Activated T-helper 1 cell treated with anti-CD3 and anti-CD28 coated beads, Interleukin-12 subunit alpha, Interleukin-12 subunit beta, Interleukin-2, Interleukin-4 antibody, amounts not matched to agents 30 ng/mL and 10 ng/mL and 1 ng/mL, durations not matched to agents 14 hours and 24 hours and 36 hours (primary cell): ENCODE measurements at regions of chr17 and their contacts with region 1.

Region 1: DNA sequence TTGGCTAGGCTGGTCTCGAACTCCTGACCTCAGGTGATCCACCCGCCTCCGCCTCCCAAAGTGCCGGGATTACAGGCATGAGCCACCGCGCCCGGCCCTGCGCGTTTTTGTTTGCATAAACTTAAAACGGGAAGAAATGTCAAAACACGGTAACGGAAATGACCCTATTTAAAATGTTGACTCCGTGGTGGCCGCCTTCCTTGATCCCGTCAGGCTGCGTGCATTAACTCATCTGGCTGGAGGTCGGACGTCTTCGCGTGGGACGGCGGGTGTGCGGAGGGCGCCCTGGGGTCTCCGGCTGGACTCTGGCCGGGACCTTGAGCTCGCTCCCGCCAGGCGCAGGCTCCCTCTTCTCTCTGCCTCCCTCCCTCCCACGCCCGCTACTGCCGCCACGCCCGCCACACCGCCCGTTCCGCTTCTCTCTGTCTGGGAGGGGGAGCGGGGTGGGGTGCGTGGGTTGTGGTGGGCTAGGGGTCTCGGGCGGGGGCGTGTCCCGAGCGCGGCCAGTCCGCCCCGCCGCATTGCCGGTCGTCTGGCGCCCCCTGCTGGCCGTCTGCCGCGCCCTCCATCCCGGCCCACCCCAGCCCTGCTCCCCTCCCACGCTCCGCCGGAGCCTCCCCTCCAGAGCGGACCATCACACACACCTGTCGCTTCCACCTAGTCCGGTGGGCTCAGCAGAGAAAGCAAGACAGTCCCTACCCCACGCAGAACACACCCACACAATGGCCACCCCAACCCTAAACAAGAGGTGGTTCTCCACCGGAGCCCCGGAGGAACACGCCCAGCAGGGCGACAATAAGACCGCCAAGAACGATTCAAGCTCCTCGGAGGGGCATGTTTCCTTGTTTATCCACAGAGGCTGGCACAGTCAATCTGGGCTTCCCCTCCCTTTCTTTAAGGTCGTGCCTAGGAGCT is 1.2 kb upstream of the CCDC42 start:
- DNase-seq: peak; percentile 63
- H3K4me3 Mint-ChIP-seq: peak overlapping the region; percentile 87
- H3K27ac Mint-ChIP-seq: peak overlapping the region; percentile 75
- H3K4me1 Mint-ChIP-seq: peaks cover 13% of the 10 kb centered on the region
- H3K27me3 Mint-ChIP-seq: peaks cover 6% of the 10 kb centered on the region

Region 2: DNA sequence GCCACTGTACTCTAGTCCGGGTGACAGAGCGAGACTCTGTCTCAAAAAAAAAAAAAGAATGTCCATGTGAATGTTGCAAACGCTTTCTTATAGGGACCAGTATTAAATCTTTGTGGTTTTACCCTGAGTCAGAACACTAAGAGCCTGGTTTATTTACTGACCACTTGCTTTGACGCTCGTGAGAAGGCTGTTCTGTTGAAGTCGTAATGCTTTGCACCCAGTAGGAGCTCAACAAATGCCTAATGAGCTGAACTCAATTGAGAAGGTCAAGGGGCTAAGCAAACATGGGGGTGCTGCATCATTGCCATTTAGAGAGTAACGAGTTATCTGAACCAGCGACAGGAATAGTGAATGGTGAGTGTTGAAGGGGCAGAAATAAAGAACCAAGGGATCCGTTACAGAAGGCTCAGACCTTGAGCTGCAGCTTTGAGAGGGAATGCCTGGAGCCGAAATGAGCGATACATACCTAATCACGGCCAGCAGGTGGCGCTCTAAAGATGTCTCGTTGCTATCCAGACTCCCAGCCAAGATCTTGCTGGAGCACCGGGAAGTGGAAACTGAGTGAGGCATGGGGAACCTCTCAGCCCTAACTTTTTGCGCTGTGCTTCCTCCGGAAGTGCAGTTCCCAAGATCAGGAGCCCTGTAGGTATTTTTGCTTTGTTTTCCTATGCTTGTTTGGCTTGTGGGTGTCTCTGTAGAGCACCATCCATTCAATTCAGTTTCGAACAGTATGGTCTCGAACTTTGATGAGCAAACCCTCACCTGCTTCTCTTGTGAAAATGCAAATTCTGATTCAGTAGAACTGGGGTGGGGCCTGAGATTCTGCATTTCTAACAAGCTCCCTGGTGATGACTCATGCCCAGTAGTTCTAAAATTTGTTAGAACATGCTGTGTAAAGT is 335.6 kb before region 1 on chr17:
- intact Hi-C with region 1: loop called (anchors 1 kb)
- DNase-seq: peak; percentile 63
- H3K4me3 Mint-ChIP-seq: no peak overlapping the region
- H3K27ac Mint-ChIP-seq: no peak overlapping the region
- H3K4me1 Mint-ChIP-seq: peaks cover 22% of the 10 kb centered on the region
- H3K27me3 Mint-ChIP-seq: peaks cover 26% of the 10 kb centered on the region

Region 3: GRCh38 chr17:8572764-8573163 is 173.1 kb before region 1 on chr17:
- intact Hi-C with region 1: loop called (anchors 2 kb)
- DNase-seq: no peak
- H3K4me3 Mint-ChIP-seq: no peak overlapping the region
- H3K27ac Mint-ChIP-seq: no peak overlapping the region
- H3K4me1 Mint-ChIP-seq: no peaks in the 10 kb centered on the region
- H3K27me3 Mint-ChIP-seq: peaks cover 2% of the 10 kb centered on the region

Region 4: DNA sequence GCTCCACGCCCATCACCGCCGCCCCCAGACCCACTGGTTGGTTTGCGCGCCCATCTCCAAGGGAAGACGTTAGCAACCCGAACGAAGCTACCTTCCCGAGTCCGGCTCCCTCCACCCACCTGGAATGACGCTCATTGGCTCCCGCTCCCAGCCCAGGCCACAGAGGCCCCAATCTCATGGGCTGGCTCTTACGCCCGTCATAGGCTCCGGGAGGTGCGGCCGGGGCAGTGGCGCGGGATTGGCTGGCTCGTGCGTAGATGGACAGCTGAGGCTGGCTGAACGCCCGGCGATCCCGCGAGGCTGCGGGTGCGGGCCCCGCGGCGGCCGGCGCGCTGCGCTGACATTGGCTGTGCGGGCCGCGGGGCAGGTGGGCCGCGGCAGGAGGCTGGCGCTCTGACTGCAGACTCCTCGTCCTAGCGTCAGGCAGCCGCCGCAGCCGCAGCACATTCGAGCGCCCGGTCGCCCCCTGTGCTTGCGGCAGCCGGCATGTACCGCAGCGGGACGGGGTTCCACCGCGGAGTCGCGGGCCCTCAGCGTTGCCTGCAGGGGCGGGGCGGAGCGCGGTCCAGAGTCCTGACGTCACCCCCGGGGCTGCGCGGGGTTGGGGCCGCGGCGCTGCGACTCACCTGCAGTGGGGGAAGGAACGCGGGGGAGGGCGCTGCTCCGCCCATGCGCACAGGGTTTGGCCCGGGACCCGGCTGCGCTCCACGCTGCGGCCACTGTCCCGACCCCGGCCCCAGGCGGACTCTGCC is 114.9 kb before region 1 on chr17:
- intact Hi-C with region 1: loop called (anchors 1 kb)
- DNase-seq: peak; percentile 88
- H3K4me3 Mint-ChIP-seq: peak overlapping the region; percentile 92
- H3K27ac Mint-ChIP-seq: no peak overlapping the region
- H3K4me1 Mint-ChIP-seq: peaks cover 18% of the 10 kb centered on the region
- H3K27me3 Mint-ChIP-seq: peaks cover 52% of the 10 kb centered on the region

Region 5: DNA sequence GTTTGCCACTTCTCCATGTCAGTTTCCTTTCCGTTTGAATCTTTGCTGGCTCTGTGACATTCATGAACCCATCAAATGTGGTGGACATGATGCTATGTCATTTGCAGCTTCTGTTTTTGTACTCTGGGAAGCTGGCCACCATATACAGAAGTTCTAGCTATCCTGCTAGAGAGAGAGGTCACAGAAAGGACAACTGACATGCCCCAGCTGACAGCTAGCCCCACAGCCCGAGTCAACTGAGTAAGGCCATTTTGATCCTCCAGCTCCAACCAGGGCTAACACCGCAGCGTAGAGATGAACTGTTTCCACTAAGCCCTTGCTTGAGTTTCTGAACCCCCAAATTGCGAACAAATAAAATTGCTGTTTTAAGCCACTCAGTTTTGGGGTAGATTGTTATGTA is 35.0 kb before region 1 on chr17:
- intact Hi-C with region 1: no loop called
- DNase-seq: no peak
- H3K4me3 Mint-ChIP-seq: no peak overlapping the region
- H3K27ac Mint-ChIP-seq: no peak overlapping the region
- H3K4me1 Mint-ChIP-seq: no peaks in the 10 kb centered on the region
- H3K27me3 Mint-ChIP-seq: no peaks in the 10 kb centered on the region

Region 6: DNA sequence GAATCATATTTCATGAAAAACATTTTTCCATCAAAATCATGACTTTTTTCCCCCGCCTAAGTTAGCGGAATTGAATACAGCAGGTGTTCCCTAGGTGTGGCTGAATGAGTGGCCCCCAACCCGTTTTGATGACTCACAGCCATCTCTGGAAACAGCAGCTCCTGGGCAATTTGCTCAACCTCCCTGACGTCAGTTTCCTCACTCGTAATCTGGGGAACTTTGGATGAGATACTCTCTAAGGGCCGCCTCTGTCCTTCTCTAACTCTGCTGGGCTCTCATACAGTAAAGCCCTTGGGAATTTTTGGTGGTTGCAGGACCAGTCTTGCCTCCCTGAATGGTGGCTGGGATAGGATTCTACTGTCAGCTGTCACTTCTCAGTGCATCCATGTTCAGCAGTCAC is 263.9 kb after region 1 on chr17:
- intact Hi-C with region 1: no loop called
- DNase-seq: no peak
- H3K4me3 Mint-ChIP-seq: no peak overlapping the region
- H3K27ac Mint-ChIP-seq: no peak overlapping the region
- H3K4me1 Mint-ChIP-seq: no peaks in the 10 kb centered on the region
- H3K27me3 Mint-ChIP-seq: peaks cover 65% of the 10 kb centered on the region